GM10248 (cell line): ENCODE measurements at regions of chr15 and their contacts with region 1.

Region 1: GRCh38 chr15:33292717-33293307 is 18.0 kb upstream of the RYR3 start:
- DNase-seq: peak; percentile 53
- CTCF ChIP-seq: peak; percentile 72

Region 2: DNA sequence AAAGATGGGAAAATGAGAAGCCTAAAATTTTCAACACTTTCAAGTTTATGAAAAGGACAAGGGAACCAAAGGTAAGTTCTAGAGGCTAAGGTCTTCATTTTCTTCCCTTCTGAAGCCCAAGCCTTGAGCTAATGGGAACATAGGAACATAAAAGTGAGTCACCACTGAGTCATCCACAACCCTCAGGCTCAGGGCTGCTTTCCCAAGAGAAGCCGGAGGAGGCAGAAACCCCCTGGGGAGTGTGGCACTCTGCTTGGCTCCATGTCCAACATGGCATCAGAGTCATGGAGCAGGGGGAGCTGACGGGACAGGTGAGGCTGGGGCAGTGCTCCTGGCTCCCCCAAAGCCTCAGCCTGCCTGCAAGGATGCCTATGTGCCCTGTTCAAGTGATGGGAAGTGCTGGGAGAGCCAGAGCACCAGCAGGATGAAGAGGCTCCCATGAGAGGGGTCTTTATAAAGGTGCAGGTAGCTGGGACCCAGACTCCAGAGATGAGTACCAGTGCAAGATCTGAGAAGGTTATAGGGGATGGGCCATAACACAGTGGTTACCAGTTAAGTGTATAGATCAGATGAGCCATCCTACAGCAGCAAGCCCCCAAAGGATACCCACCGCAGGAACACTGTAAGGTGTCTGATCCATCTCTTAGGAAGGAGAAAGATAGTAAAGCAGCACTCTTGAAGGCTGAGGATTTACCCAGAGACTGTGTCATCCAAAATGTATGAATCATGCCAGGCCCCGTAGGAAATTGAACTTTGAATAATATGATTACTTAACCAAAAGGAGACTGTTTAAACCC is 13.8 kb before region 1 on chr15:
- CTCF ChIA-PET with region 1: interaction called, 11 read pairs
- POLR2A ChIA-PET with region 1: no interaction called
- DNase-seq: no peak
- CTCF ChIP-seq: no peak

Region 3: DNA sequence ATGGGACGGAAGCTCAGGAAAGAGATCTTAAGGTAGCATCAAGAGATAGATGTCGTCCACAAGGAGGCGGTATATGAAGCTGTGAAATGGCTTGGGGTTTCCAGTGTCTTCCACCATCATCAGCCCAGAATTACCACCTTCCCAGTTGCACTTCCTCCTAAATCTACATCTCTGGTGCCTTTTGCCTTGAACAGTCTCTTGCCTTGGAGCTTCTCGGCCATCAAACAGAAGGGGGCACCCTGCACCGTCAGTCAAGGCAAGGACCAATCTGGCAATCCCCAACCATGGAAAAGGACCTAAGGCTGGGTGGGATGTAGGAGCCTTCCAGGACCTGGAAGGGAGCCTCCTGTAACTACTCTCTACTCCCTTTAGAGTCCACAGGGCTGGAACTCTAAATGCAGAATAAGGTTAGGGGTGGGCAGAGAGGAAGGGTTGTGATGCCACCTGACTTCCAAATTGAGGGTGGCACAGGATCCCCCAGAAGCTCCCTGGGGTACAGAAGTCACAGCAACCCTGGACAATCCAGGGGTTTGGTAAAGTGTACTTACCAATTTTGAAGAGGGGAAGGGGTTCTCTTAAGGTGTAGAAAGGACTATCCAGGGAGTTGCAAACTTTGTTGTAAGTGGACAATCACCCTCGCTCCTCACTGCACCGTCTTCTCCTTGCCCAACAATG is 16.9 kb after region 1 on chr15:
- CTCF ChIA-PET with region 1: interaction called, 16 read pairs
- POLR2A ChIA-PET with region 1: no interaction called
- DNase-seq: peak; percentile 40
- CTCF ChIP-seq: no peak